ENCODE measurements at regions of chr14 and their contacts with region 1.

Region 1: DNA sequence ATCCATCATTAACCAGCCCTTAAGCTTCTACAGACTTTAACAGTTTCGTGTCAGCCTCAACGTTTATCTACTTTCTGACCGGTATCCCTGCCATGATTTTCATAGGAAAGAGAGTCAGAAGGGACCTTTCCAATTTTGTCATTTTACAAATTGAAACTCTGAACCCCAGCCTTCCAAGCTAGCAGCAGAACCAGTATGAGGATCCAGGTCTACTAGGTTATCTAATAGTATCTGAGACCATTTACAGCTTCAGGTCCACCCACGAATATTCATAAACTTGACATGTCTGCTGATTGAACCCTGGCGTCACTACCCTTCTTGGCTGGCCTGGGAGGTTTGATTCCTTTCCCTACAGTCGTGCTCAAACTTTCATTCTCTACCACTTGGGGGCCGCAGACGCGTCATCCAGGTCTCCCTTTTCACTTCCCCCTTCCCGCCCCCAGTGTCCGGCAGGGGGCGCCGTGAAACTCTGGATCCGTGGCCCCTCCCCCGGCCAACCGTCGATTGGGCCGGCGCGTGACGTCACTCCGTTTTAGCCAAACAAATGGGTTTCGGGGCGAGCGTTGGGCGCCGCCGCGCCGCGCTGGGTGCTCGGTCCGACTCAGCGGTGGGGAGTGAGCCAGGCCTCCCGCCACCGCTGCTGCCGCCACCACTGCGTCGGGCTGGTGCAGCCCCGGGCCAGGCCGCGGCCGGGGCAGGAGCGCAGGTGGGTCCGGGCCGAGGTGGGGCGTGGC is at the start of gene FBXO34:
- DNase-seq: peak; percentile 99 to 100 (median 100)
- ATAC-seq: peak; percentile 94
- H3K4me3 ChIP-seq: peak within 1 kb of the TSS; percentile 39
- H3K27ac ChIP-seq: peak within 1 kb of the TSS; percentile 57
- H3K4me1 ChIP-seq: no peaks in the 10 kb centered on the region
- H3K27me3 ChIP-seq: no peaks in the 10 kb centered on the region
- total RNA-seq, gene FBXO34: 21.6 to 30.0 (median 25.3) TPM

Region 2: DNA sequence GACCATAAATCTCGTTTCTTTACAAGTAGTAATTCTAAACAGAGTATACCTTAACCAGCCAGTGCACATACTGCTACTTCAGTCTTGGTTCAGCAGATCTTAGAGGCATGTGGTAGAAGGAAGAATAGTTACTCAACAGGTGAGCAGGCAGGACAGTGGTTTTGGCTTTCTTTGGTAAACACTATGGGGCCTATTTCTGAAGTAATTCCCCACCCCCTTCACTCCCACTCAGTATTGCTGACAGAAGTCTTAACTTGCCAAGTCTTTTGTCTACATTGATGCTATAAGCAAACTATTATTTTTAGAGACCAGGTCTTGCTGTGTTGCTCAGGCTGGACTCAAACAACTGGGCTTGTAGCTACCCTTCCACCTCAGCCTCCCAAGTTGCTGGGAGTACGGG is 68.8 kb after region 1 on chr14:
- intact Hi-C with region 1: loop called in 1 of 4 experiments (anchors 10 kb)
- DNase-seq: no peak
- ATAC-seq: no peak
- H3K4me3 ChIP-seq: no peak overlapping the region
- H3K27ac ChIP-seq: no peak overlapping the region
- H3K4me1 ChIP-seq: peaks cover 2% of the 10 kb centered on the region
- H3K27me3 ChIP-seq: no peaks in the 10 kb centered on the region

Region 3: DNA sequence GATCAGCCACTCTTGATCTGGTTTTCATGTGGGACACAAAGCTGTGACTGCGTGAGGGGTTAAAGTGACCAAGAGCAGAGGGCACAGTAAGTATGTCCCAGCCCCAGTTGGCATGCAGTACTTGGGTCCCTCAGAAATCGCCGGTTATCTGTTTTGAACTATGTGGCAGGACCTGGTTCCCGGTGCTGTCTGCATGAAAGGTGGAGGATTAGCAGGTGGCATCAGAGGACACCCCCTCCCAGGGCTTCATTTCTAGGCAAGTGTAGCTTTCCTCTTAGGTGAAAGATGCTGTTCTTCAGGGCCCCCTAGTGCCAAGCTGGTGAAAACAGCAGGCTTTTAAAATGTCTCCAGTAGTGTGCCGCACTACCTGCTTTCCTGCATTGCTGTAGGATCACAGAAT is 83.5 kb after region 1 on chr14:
- intact Hi-C with region 1: loop called (anchors 2 to 10 kb)
- DNase-seq: peak in 2 of 3 donors; percentile 19 to 46
- ATAC-seq: peak; percentile 66 to 81
- H3K4me3 ChIP-seq: no peak overlapping the region
- H3K27ac ChIP-seq: no peak overlapping the region
- H3K4me1 ChIP-seq: no peaks in the 10 kb centered on the region
- H3K27me3 ChIP-seq: no peaks in the 10 kb centered on the region

Region 4: DNA sequence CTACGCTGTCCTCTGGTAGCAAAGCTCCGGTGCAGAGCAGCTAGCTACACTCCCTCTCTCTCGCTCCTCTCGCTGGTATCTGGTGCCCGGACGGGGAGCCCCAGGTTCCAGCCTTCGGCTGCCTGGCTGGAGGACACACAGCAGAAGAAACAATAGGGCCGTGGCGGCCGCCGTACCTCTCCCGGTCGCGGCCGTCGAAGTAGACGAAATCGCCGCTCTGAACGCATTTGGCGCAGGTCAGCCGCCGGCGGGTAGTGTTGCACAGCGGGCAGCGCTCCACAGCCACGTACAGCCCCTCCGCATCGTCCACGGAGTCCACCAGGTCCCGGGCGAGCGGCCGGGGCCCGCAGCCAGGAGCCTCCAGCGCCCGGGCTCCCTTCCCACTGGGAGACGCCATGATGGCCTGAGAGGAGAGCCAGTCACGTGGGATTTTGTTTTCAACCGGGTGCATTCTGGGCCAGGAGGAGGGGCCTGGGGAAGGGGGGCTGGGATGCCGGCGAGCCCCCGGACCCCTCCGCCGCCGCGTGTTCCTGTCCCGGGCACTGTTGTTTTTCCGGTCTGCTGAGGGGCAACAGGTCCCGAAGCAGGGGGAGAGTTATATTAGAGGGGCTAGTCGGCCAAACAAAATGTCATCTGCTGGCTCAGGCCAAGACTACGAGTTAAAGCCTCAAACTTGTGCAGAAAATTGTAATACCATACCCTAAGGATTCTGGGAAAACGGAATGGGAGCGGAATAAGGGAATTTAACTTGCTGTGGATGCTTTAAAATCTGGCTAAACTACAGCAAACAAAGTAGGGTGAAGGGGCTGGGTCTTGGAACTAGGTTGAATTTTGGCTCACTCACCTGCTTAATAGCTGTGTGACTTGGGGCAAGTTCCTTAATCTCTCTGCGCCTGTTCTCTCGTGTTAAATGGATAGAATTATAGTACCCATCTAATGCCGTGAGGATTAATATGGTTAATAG is 140.7 kb after region 1 on chr14 and contains the start of gene ATG14:
- intact Hi-C with region 1: loop called in 1 of 4 experiments (anchors 10 kb)
- DNase-seq: peak; percentile 84 to 93 (median 93)
- ATAC-seq: peak; percentile 99
- H3K4me3 ChIP-seq: peak within 1 kb of the TSS; percentile 96
- H3K27ac ChIP-seq: peak within 1 kb of the TSS; percentile 96
- H3K4me1 ChIP-seq: no peaks in the 10 kb centered on the region
- H3K27me3 ChIP-seq: no peaks in the 10 kb centered on the region
- total RNA-seq, gene ATG14: 8.0 to 12.9 (median 10.9) TPM

Region 5: GRCh38 chr14:55938249-55938791 is 667.3 kb after region 1 on chr14:
- intact Hi-C with region 1: no loop called
- DNase-seq: peak in 2 of 3 donors; percentile 53 to 58
- ATAC-seq: peak; percentile 57 to 67
- H3K4me3 ChIP-seq: no peak overlapping the region
- H3K27ac ChIP-seq: no peak overlapping the region
- H3K4me1 ChIP-seq: no peaks in the 10 kb centered on the region
- H3K27me3 ChIP-seq: no peaks in the 10 kb centered on the region

Measured in right cardiac atrium (tissue), 5 donors.